Naive thymus-derived CD4-positive, alpha-beta T cell (primary cell): ENCODE measurements at regions of chr3 and their contacts with region 1.

Region 1: GRCh38 chr3:45167011-45167911 is 21.1 kb upstream of the CDCP1 start:
- DNase-seq: peak; percentile 56 to 79 (median 74)
- ATAC-seq: peak; percentile 95
- H3K4me3 ChIP-seq: peak overlapping the region; percentile 33
- H3K4me3 Mint-ChIP-seq: peak overlapping the region; percentile 65 to 87 (median 78)
- H3K27ac ChIP-seq: peak overlapping the region; percentile 30
- H3K27ac Mint-ChIP-seq: peak overlapping the region; percentile 82 to 95 (median 90)
- H3K4me1 ChIP-seq: peaks cover 9 to 19% of the 10 kb centered on the region in 2 donors
- H3K4me1 Mint-ChIP-seq: peaks cover 16 to 56% (median 40%) of the 10 kb centered on the region in 7 donors
- H3K27me3 ChIP-seq: no peaks in the 10 kb centered on the region
- H3K27me3 Mint-ChIP-seq: peaks cover 0 to 3% (median 0%) of the 10 kb centered on the region in 5 donors

Region 2: GRCh38 chr3:45078910-45079522 is 88.2 kb before region 1 on chr3:
- CTCF ChIA-PET with region 1: no interaction called
- POLR2A ChIA-PET with region 1: no interaction called
- intact Hi-C with region 1: loop called in 1 of 2 experiments (anchors 10 kb)
- DNase-seq: peak in 5 of 9 donors; percentile 8 to 51 (median 33)
- ATAC-seq: peak; percentile 32
- H3K4me3 ChIP-seq: no peak overlapping the region
- H3K4me3 Mint-ChIP-seq: no peak overlapping the region
- H3K27ac ChIP-seq: no peak overlapping the region
- H3K27ac Mint-ChIP-seq: peak overlapping the region in 4 of 9 donors; percentile 48 to 82 (median 63)
- H3K4me1 ChIP-seq: no peaks in the 10 kb centered on the region
- H3K4me1 Mint-ChIP-seq: peaks cover 3 to 13% (median 4%) of the 10 kb centered on the region in 7 donors
- H3K27me3 ChIP-seq: no peaks in the 10 kb centered on the region
- H3K27me3 Mint-ChIP-seq: peaks cover 0 to 26% (median 0%) of the 10 kb centered on the region in 5 donors

Region 3: DNA sequence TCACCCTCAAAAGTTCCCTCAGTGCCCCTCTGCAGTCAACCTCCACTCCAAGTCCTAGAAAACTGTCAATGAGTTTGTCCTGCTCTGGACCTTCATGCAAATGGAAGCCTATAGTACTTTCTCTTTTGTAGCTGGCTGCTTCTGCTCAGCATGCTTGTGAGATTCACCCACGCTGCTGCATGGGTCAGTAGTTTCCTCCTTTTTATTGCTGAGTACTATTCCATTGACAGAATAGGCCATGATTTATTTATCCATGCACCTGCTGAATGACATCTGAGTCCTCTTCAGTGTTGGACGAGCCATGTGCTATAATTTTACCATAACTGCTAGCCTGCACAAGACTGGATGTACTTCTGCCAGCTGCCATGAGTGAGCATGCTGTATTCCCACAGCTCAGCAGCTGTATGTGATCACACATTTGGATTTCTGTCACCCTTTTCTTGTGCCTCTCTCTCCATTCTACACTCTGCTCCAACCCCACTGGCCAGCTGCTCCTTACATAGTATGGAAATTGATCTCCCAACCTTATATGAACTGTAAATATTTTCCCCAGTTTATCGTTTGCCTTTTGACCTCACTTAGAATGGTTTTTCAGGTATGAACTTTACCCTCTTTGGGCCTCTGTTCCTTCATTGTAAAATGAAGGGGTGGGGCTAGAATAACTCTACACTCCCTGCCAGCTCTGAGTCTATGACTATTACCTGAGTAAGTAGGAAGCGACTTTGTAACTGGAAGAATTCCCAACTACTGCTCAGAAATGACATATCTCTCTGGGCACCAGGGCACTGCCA is 47.2 kb before region 1 on chr3:
- CTCF ChIA-PET with region 1: no interaction called
- POLR2A ChIA-PET with region 1: no interaction called
- intact Hi-C with region 1: loop called (anchors 1 to 2 kb)
- DNase-seq: no peak
- ATAC-seq: no peak
- H3K4me3 ChIP-seq: no peak overlapping the region
- H3K4me3 Mint-ChIP-seq: no peak overlapping the region
- H3K27ac ChIP-seq: no peak overlapping the region
- H3K27ac Mint-ChIP-seq: peak overlapping the region in 1 of 9 donors; percentile 23
- H3K4me1 ChIP-seq: peaks cover 17 to 22% of the 10 kb centered on the region in 2 donors
- H3K4me1 Mint-ChIP-seq: peaks cover 16 to 62% (median 27%) of the 10 kb centered on the region in 7 donors
- H3K27me3 ChIP-seq: peaks cover 0 to 3% of the 10 kb centered on the region in 2 donors
- H3K27me3 Mint-ChIP-seq: peaks cover 0 to 43% (median 0%) of the 10 kb centered on the region in 5 donors

Region 4: GRCh38 chr3:45145681-45146614 is 21.3 kb before region 1 on chr3 and contains the start of gene CDCP1:
- CTCF ChIA-PET with region 1: no interaction called
- POLR2A ChIA-PET with region 1: no interaction called
- intact Hi-C with region 1: loop called (anchors 2 kb)
- DNase-seq: peak in 2 of 9 donors; percentile 7 to 26
- ATAC-seq: no peak
- H3K4me3 ChIP-seq: peak within 1 kb of the TSS; percentile 44
- H3K4me3 Mint-ChIP-seq: peak within 1 kb of the TSS; percentile 72 to 94 (median 88)
- H3K27ac ChIP-seq: no peak within 1 kb of the TSS
- H3K27ac Mint-ChIP-seq: peak within 1 kb of the TSS in 5 of 9 donors; percentile 27 to 77 (median 40)
- H3K4me1 ChIP-seq: peaks cover 4 to 13% of the 10 kb centered on the region in 2 donors
- H3K4me1 Mint-ChIP-seq: peaks cover 11 to 22% (median 17%) of the 10 kb centered on the region in 7 donors
- H3K27me3 ChIP-seq: peaks cover 0 to 10% of the 10 kb centered on the region in 2 donors
- H3K27me3 Mint-ChIP-seq: peaks cover 39 to 80% (median 43%) of the 10 kb centered on the region in 5 donors
- total RNA-seq, gene CDCP1: 0.05 to 7.2 (median 0.81) TPM